ENCODE measurements at regions of chr17 and their contacts with region 1.

Region 1: GRCh38 chr17:77957857-77958715 is at the start of gene TNRC6C:
- DNase-seq: peak; percentile 97 to 100 (median 100)
- ATAC-seq: peak; percentile 78 to 86
- H3K4me3 Mint-ChIP-seq: peak within 1 kb of the TSS; percentile 96 to 100 (median 99)
- H3K27ac Mint-ChIP-seq: peak within 1 kb of the TSS; percentile 94 to 99 (median 97)
- H3K4me1 Mint-ChIP-seq: peaks cover 33 to 49% (median 42%) of the 10 kb centered on the region in 4 donors
- H3K27me3 Mint-ChIP-seq: peaks cover 0 to 11% (median 0%) of the 10 kb centered on the region in 5 donors
- polyA plus RNA-seq, gene TNRC6C: 4.9 to 8.6 (median 5.8) TPM

Region 2: DNA sequence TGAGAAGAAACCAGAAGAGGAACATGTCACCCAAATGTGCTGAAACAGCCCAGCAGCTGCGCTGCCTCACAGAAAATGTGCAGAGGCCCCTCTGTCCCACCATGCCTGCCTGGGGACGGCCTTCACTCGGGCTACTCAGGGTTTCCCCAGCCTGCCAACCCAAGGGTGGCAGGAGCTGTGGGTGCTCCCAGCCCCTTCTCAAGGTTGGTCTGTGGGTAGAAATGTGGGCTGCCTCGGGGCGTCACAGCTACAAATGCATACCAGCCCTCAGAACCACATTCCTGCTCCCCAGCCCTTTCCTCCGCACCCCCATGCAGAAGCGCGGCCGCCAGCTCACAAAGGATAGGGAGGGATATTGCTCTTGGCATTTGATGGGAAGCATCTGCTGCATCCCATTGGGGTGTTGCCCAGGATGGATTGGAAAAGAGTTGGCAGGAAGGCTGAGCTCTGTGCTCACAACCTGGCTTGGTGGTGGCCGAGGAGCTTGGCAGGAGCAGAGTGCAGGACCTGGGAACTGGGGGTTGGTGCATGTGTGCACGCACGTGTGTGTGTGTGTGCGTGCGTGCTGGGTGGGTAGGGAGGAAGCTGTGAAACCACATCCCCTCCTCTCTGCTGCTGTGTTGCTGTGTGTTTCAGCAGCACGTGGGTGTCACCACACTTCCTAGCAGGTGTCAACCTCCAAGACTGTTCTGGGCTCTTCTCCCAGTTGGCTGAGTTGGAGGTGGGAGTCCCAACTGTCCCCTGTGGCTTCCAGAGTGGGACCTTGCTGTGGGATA is 512.9 kb before region 1 on chr17:
- POLR2A ChIA-PET with region 1: interaction called, 10 read pairs
- DNase-seq: peak; percentile 67 to 98 (median 88)
- ATAC-seq: peak; percentile 60 to 77
- H3K4me3 Mint-ChIP-seq: peak overlapping the region; percentile 72 to 99 (median 86)
- H3K27ac Mint-ChIP-seq: peak overlapping the region; percentile 93 to 100 (median 99)
- H3K4me1 Mint-ChIP-seq: peaks cover 59 to 98% (median 96%) of the 10 kb centered on the region in 4 donors
- H3K27me3 Mint-ChIP-seq: peaks cover 0 to 4% (median 0%) of the 10 kb centered on the region in 5 donors

Region 3: DNA sequence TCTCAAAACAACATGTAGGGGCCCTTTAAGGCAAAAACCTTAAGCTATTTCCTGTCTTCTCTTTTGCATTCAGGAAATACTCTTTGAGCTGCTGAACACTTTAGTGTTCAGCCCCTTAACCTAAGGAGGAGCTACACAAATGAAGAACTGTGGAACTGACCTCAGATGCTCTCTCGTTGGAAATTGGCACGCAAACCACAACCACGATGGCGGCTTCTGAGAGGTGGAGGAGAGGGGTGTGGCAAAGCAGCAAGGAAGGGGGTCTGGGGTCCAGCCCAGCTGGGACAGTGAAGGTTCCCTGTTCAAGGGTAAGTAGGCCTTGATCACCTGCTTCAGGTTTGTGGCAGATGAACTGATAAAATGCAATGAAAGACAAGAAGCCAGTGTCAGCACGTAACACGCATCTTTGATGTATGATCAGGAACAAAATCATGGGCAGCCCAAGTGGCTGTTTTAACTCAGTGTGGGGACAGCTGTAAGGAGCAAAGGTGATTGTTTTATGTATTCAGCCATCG is 291.1 kb before region 1 on chr17:
- POLR2A ChIA-PET with region 1: interaction called, 20 read pairs
- DNase-seq: peak; percentile 43 to 87 (median 76)
- ATAC-seq: peak; percentile 90 to 91
- H3K4me3 Mint-ChIP-seq: peak overlapping the region; percentile 88 to 98 (median 94)
- H3K27ac Mint-ChIP-seq: peak overlapping the region; percentile 94 to 99 (median 98)
- H3K4me1 Mint-ChIP-seq: peaks cover 32 to 67% (median 52%) of the 10 kb centered on the region in 4 donors
- H3K27me3 Mint-ChIP-seq: no peaks in the 10 kb centered on the region

Region 4: DNA sequence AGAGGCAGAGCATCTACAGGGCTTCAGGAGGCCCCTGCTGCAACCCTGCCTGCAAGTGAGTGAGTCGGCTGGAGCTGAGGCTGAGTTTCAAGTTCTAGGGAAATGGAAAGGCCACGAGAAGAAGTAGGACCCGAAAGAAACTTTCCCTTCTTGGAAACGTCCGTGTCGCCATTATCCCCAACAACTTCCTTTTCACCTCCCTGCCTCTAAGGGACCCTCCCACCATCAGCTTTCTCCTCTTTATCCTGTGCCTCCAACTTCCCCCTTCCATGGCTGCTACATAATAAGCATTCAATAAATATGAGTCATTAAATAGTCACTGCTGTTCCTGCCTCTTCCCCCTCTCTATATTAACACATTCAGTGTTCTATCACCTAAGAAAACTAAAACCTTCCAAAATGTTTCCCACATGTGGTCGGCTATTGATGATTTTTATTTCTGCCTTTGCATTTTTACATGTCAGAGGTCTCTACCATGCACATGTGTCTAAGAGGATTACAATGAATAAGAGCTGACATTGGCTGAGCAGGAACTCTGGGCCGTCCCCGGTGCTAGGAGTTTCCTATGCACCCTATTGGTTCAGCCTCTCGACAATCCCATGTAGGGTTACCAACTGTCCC is 115.4 kb before region 1 on chr17:
- POLR2A ChIA-PET with region 1: interaction called, 24 read pairs
- DNase-seq: no peak
- ATAC-seq: no peak
- H3K4me3 Mint-ChIP-seq: peak overlapping the region in 7 of 10 donors; percentile 33 to 79 (median 61)
- H3K27ac Mint-ChIP-seq: peak overlapping the region in 9 of 10 donors; percentile 17 to 89 (median 79)
- H3K4me1 Mint-ChIP-seq: peaks cover 28 to 72% (median 55%) of the 10 kb centered on the region in 4 donors
- H3K27me3 Mint-ChIP-seq: peaks cover 0 to 2% (median 0%) of the 10 kb centered on the region in 5 donors

Region 5: GRCh38 chr17:77892469-77893143 is 65.5 kb before region 1 on chr17:
- POLR2A ChIA-PET with region 1: interaction called, 166 read pairs
- DNase-seq: peak in 1 of 10 donors; percentile 50
- ATAC-seq: no peak
- H3K4me3 Mint-ChIP-seq: peak overlapping the region in 6 of 10 donors; percentile 24 to 75 (median 52)
- H3K27ac Mint-ChIP-seq: peak overlapping the region in 7 of 10 donors; percentile 27 to 91 (median 76)
- H3K4me1 Mint-ChIP-seq: peaks cover 27 to 52% (median 41%) of the 10 kb centered on the region in 4 donors
- H3K27me3 Mint-ChIP-seq: no peaks in the 10 kb centered on the region

Region 6: DNA sequence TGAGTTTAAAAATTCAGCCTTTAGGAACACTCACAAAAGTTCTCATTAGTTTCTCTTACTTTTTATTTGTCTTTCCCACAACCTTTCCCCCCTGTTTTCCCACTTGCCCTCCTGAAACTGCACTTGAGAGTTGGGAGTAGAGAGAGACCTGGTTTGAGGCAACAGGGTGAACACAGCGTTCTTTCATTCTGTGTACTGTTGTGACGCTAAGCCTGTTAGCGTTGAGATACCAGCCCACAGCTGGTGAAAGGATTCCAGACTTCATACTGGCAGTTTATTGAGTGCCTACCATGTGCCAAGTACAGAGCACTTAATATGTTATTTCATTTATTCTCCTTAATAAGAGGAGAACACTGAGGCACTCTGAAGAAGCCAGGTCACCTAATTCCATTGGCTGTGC is 10.7 kb after region 1 on chr17:
- POLR2A ChIA-PET with region 1: interaction called, 15 read pairs
- DNase-seq: no peak
- ATAC-seq: no peak
- H3K4me3 Mint-ChIP-seq: peak overlapping the region in 8 of 10 donors; percentile 12 to 72 (median 50)
- H3K27ac Mint-ChIP-seq: peak overlapping the region in 2 of 10 donors; percentile 40 to 55
- H3K4me1 Mint-ChIP-seq: peaks cover 57 to 99% (median 93%) of the 10 kb centered on the region in 4 donors
- H3K27me3 Mint-ChIP-seq: no peaks in the 10 kb centered on the region

Region 7: DNA sequence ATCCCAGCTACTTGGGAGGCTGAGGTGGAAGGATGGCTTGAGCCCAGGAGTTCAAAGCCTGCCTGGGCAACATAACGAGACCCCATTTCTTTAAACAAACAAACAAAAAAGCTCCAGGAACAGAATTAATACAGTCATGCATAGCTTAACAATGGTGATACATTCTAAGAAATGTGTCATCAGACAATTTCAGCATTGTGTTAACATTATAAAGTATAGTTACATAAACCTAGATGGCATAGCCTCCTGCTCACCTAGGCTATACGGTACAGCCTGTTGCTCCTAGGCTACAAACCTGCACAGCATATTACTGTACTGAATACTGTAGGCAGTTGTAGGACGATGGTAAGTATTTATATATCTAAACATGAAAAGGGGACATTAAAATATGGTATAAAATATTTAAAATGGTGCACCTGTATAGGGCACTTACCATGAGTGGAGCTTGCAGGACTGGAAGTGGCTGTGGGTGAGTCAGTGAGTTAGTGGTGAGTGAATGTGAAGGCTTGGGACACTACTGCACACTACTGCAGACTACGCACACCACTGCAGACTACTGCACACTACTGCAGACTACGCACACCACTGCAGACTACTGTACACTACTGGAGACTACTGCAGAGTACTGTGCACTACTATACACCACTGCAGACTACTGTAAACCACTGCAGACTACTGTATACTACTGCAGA is 95.8 kb after region 1 on chr17:
- POLR2A ChIA-PET with region 1: no interaction called
- DNase-seq: no peak
- ATAC-seq: no peak
- H3K4me3 Mint-ChIP-seq: no peak overlapping the region
- H3K27ac Mint-ChIP-seq: no peak overlapping the region
- H3K4me1 Mint-ChIP-seq: peaks cover 11 to 58% (median 39%) of the 10 kb centered on the region in 4 donors
- H3K27me3 Mint-ChIP-seq: no peaks in the 10 kb centered on the region

Region 8: GRCh38 chr17:78120971-78121800 is 163.1 kb after region 1 on chr17:
- POLR2A ChIA-PET with region 1: interaction called, 19 read pairs
- DNase-seq: peak in 9 of 10 donors; percentile 37 to 86 (median 67)
- ATAC-seq: peak; percentile 55 to 67
- H3K4me3 Mint-ChIP-seq: peak overlapping the region; percentile 78 to 100 (median 86)
- H3K27ac Mint-ChIP-seq: peak overlapping the region; percentile 86 to 96 (median 90)
- H3K4me1 Mint-ChIP-seq: peaks cover 38 to 84% (median 74%) of the 10 kb centered on the region in 4 donors
- H3K27me3 Mint-ChIP-seq: no peaks in the 10 kb centered on the region

Measured in naive thymus-derived CD8-positive, alpha-beta T cell (primary cell).